Activated CD4-positive, alpha-beta memory T cell treated with anti-CD3 and anti-CD28 coated beads for 36 hours (primary cell): ENCODE measurements at regions of chr19 and their contacts with region 1.

Region 1: GRCh38 chr19:38849860-38850435 is at the start of gene HNRNPL:
- DNase-seq: peak; percentile 99
- H3K4me3 Mint-ChIP-seq: peak within 1 kb of the TSS; percentile 97
- H3K27ac Mint-ChIP-seq: peak within 1 kb of the TSS; percentile 97
- H3K4me1 Mint-ChIP-seq: peaks cover 41% of the 10 kb centered on the region
- H3K27me3 Mint-ChIP-seq: no peaks in the 10 kb centered on the region
- total RNA-seq, gene HNRNPL: 646 to 671 TPM

Region 2: DNA sequence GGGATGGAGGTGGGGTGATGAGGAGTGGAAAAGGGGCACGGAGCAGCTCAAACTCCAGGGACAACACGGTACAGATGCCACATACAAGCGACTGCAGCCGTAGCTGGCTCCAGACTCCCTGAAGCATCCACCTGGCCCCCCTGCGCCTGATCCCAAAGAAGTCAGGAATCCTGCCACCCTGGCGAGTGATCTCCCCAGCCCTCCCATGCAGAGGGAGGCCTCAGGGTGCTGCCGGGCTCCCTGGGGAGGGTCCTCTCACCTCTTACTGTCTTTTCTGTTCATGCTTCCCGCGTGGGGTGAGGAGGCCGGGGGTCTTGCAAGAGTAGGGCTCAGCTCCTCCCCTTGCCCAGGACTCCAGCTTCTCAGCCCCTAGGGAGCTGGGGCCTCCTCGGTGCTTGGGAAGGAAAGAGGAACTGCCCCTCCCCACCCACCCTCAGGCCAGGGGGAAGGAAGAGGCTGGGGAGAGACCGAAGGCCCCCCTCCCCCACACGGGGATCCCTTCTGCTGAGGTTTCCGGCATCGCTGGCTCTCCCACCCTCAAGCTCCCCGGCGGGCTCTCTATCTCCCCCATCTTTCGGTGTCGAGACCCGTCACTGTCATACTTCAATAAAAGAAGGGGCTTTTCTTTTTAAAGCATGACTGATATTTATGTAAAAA is 424.0 kb before region 1 on chr19 and contains the start of gene RASGRP4:
- CTCF ChIA-PET with region 1: no interaction called
- POLR2A ChIA-PET with region 1: interaction called, 3 read pairs
- intact Hi-C with region 1: loop called (anchors 5 kb)
- DNase-seq: peak; percentile 79
- H3K4me3 Mint-ChIP-seq: peak within 1 kb of the TSS; percentile 61
- H3K27ac Mint-ChIP-seq: peak within 1 kb of the TSS; percentile 92
- H3K4me1 Mint-ChIP-seq: peaks cover 35% of the 10 kb centered on the region
- H3K27me3 Mint-ChIP-seq: no peaks in the 10 kb centered on the region
- total RNA-seq, gene RASGRP4: 7.4 to 8.3 TPM

Region 3: GRCh38 chr19:38831142-38831605 is 18.8 kb before region 1 on chr19:
- CTCF ChIA-PET with region 1: interaction called, 3 read pairs
- POLR2A ChIA-PET with region 1: interaction called, 7 read pairs
- intact Hi-C with region 1: loop called (anchors 1 kb)
- DNase-seq: peak; percentile 65
- H3K4me3 Mint-ChIP-seq: peak overlapping the region; percentile 79
- H3K27ac Mint-ChIP-seq: peak overlapping the region; percentile 88
- H3K4me1 Mint-ChIP-seq: peaks cover 21% of the 10 kb centered on the region
- H3K27me3 Mint-ChIP-seq: no peaks in the 10 kb centered on the region

Region 4: GRCh38 chr19:38869856-38870607 is 20.1 kb after region 1 on chr19:
- CTCF ChIA-PET with region 1: interaction called, 15 read pairs
- POLR2A ChIA-PET with region 1: interaction called, 24 read pairs
- intact Hi-C with region 1: loop called (anchors 1 kb)
- DNase-seq: peak; percentile 94
- H3K4me3 Mint-ChIP-seq: peak overlapping the region; percentile 76
- H3K27ac Mint-ChIP-seq: peak overlapping the region; percentile 79
- H3K4me1 Mint-ChIP-seq: peaks cover 40% of the 10 kb centered on the region
- H3K27me3 Mint-ChIP-seq: no peaks in the 10 kb centered on the region

Region 5: GRCh38 chr19:38899447-38900219 is 49.7 kb after region 1 on chr19 and contains the starts of genes NFKBIB and SIRT2:
- CTCF ChIA-PET with region 1: no interaction called
- POLR2A ChIA-PET with region 1: interaction called, 4 read pairs
- intact Hi-C with region 1: loop called (anchors 1 kb)
- DNase-seq: peak; percentile 100
- H3K4me3 Mint-ChIP-seq: peak within 1 kb of the TSS; percentile 95
- H3K27ac Mint-ChIP-seq: peak within 1 kb of the TSS; percentile 87
- H3K4me1 Mint-ChIP-seq: peaks cover 33% of the 10 kb centered on the region
- H3K27me3 Mint-ChIP-seq: no peaks in the 10 kb centered on the region
- total RNA-seq, gene NFKBIB: 49.6 to 53.4 TPM
- total RNA-seq, gene SIRT2: 23.5 to 24.6 TPM

Region 6: GRCh38 chr19:39397360-39398296 is 547.7 kb after region 1 on chr19:
- CTCF ChIA-PET with region 1: no interaction called
- POLR2A ChIA-PET with region 1: no interaction called
- intact Hi-C with region 1: loop called (anchors 5 kb)
- DNase-seq: peak; percentile 96
- H3K4me3 Mint-ChIP-seq: peak overlapping the region; percentile 3
- H3K27ac Mint-ChIP-seq: peak overlapping the region; percentile 85
- H3K4me1 Mint-ChIP-seq: peaks cover 57% of the 10 kb centered on the region
- H3K27me3 Mint-ChIP-seq: no peaks in the 10 kb centered on the region